Activated CD4-positive, alpha-beta T cell treated with anti-CD3 and anti-CD28 coated beads, Interleukin-2, amount 10 ng/mL, durations not matched to agents 7 days and 5 days (primary cell): ENCODE measurements at regions of chr22 and their contacts with region 1.

Region 1: GRCh38 chr22:22848364-22848866 is 39.2 kb upstream of the IGLL5 start:
- DNase-seq: peak; percentile 79
- H3K4me3 Mint-ChIP-seq: no peak overlapping the region
- H3K27ac Mint-ChIP-seq: no peak overlapping the region
- H3K4me1 Mint-ChIP-seq: peaks cover 29% of the 10 kb centered on the region
- H3K27me3 Mint-ChIP-seq: peaks cover 36% of the 10 kb centered on the region

Region 2: DNA sequence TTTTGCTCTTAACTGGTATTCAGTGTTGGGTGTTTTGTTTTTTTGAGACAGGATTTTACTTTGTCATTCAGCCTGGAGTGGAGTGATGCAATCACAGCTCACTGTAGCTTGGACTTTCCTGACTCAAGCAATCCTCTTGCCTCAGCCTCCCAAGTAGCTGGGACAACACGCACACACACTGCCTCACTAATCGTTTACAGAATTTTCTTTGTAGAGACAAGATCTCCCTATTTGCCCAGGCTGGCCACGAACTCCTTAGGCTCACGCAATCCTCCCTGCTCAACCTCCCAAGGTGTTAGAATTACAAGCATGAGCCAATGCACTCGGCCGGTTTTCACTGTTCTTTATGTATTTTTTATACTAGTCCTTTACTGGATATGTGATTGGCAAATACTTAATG is 11.8 kb before region 1 on chr22:
- CTCF ChIA-PET with region 1: interaction called, 14 read pairs
- POLR2A ChIA-PET with region 1: no interaction called
- DNase-seq: no peak
- H3K4me3 Mint-ChIP-seq: no peak overlapping the region
- H3K27ac Mint-ChIP-seq: peak overlapping the region; percentile 39
- H3K4me1 Mint-ChIP-seq: peaks cover 13% of the 10 kb centered on the region
- H3K27me3 Mint-ChIP-seq: peaks cover 38% of the 10 kb centered on the region

Region 3: GRCh38 chr22:22863001-22863400 is 14.6 kb after region 1 on chr22:
- CTCF ChIA-PET with region 1: interaction called, 12 read pairs
- POLR2A ChIA-PET with region 1: no interaction called
- DNase-seq: no peak
- H3K4me3 Mint-ChIP-seq: no peak overlapping the region
- H3K27ac Mint-ChIP-seq: no peak overlapping the region
- H3K4me1 Mint-ChIP-seq: peaks cover 37% of the 10 kb centered on the region
- H3K27me3 Mint-ChIP-seq: peaks cover 48% of the 10 kb centered on the region

Region 4: DNA sequence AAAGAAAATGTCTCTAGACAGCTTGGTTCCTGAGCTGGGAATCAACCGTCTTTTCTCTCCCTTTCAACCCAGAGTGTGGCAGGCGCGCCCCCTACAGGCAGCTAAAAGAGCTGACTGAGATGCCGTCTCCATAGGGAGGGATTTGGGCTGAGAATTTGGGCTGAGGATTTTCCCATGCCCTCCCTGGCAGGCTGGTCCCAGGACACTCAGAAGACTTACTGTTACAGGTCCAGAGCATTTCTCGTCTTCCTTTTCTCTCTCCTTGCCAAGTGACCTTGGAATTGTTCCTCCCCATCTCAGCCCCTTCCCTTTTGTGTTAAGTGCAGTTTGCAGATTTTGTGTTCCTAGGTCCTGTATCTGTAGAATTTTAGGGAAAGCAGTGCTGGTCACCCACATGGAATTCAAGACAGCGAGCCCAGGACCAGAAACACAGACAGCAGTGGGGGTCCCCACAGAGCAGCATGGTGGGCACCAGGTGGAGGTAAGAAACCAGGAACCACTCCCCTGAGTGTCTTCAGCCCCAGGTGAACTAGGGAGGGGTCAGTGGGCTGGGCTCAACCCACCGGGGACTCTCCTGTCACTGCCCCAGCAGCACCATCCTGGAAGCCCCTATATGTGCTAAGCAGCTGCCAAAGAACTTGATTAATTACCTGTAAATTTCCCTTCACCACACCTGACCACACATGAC is 29.3 kb after region 1 on chr22:
- CTCF ChIA-PET with region 1: interaction called, 14 read pairs
- POLR2A ChIA-PET with region 1: no interaction called
- DNase-seq: peak; percentile 83
- H3K4me3 Mint-ChIP-seq: no peak overlapping the region
- H3K27ac Mint-ChIP-seq: no peak overlapping the region
- H3K4me1 Mint-ChIP-seq: no peaks in the 10 kb centered on the region
- H3K27me3 Mint-ChIP-seq: peaks cover 17% of the 10 kb centered on the region